ENCODE measurements at regions of chr12 and their contacts with region 1.

Region 1: GRCh38 chr12:93990832-93991803 is 157.3 kb upstream of the PLXNC1 start:
- DNase-seq: peak in 4 of 5 donors; percentile 49 to 70 (median 59)
- ATAC-seq: peak; percentile 93 to 96 (median 94)
- H3K4me3 ChIP-seq: peak overlapping the region in 7 of 12 donors; percentile 11 to 34 (median 17)
- H3K27ac ChIP-seq: peak overlapping the region in 6 of 12 donors; percentile 22 to 61 (median 53)
- H3K4me1 ChIP-seq: peaks cover 0 to 16% (median 0%) of the 10 kb centered on the region in 12 donors
- H3K27me3 ChIP-seq: no peaks in the 10 kb centered on the region
- CTCF ChIP-seq: peak; percentile 18 to 68 (median 50)
- POLR2A ChIP-seq: no peak

Region 2: GRCh38 chr12:94039914-94040313 is 48.8 kb after region 1 on chr12:
- intact Hi-C with region 1: loop called in 1 of 10 experiments (anchors 5 kb)
- DNase-seq: no peak
- ATAC-seq: peak in 3 of 4 donors; percentile 45 to 78 (median 64)
- H3K4me3 ChIP-seq: no peak overlapping the region
- H3K27ac ChIP-seq: peak overlapping the region in 1 of 12 donors; percentile 63
- H3K4me1 ChIP-seq: peaks cover 0 to 18% (median 0%) of the 10 kb centered on the region in 12 donors
- H3K27me3 ChIP-seq: no peaks in the 10 kb centered on the region
- CTCF ChIP-seq: no peak
- POLR2A ChIP-seq: no peak

Region 3: GRCh38 chr12:94340573-94340972 is 349.5 kb after region 1 on chr12:
- intact Hi-C with region 1: no loop called
- DNase-seq: no peak
- ATAC-seq: no peak
- H3K4me3 ChIP-seq: no peak overlapping the region
- H3K27ac ChIP-seq: no peak overlapping the region
- H3K4me1 ChIP-seq: peaks cover 0 to 5% (median 0%) of the 10 kb centered on the region in 12 donors
- H3K27me3 ChIP-seq: no peaks in the 10 kb centered on the region
- CTCF ChIP-seq: no peak
- POLR2A ChIP-seq: no peak

Measured in heart left ventricle (tissue), 16 donors.